AG04450 (cell line): ENCODE measurements at regions of chr14 and their contacts with region 1.

Region 1: DNA sequence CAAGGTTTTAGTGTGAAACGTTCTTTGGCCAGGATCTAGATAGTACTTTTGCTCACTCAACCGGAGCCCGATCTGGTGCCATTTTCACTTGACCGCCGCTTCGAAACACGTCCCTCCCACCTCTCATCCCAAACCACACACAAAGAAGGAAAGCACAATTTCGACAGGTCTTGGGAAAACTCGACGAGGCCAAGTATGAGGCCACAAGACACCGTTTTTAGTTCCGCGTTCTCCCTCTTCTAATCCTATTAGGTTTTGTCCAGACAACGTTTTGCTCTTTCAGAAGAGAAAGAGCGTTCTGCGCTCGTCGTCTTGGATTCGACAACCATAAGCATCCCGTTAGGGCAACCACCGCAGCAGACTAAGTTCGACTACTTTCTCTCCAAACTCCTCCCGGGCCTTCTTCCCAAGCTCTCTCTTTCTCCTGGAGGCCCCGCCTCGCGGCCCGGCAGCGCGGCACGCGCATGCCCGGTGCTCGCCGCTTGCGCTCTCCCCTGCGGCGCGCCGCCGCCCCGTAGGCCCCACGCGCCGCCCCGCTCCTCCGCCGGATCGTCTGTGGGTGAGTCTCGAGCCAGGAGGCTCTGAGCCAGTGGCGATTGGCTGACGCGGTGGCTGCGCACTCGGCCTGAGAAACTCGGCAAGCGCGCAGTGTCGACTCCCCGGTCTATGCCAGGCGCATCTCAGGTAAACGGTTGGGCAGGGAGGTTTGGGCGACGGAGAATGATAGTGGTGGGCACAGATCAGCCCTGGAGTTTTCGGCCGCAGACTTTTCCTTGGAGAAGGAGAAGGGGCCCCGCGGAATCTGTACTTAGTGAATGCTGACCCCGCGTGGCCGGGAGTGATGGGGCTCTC is at the start of gene MIPOL1:
- DNase-seq: peak; percentile 69
- H3K4me3 ChIP-seq: peak within 1 kb of the TSS; percentile 88
- H3K27ac ChIP-seq: peak within 1 kb of the TSS; percentile 95
- H3K27me3 ChIP-seq: no peaks in the 10 kb centered on the region
- CTCF ChIP-seq: peak; percentile 41
- polyA plus RNA-seq, gene MIPOL1: 4.8 and 7.0 TPM in 2 replicates

Region 2: DNA sequence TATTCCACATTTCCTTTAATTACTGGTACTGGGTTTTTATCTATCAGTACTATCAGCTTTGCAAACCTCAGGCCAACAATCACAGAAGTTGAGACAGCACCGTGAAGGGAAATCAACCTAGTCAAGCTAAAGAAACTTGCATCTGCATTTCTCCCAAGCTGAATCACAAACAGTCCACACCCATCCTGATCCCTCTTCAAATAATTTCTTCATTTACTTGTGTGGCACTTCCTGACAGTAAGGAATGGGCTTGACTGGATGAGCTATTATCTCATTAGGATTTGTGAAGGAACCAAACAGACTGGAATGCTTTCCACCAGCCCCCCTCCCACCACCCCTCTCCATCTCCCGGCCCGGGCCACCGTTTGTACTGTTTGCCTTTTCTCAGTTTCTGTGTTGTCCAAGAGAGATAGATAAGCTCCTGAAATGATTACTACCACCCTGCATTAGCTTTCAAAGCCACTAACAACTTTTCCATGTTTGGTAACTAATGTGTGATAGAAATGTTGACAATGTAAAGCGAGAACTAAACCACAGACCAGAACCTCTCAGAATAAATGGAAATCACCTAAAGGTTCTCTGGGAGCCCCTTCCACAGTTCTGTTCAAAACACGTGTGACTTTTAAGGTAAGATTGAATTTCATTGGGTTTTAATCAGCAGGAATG is 261.5 kb before region 1 on chr14:
- CTCF ChIA-PET with region 1: no interaction called
- POLR2A ChIA-PET with region 1: no interaction called
- DNase-seq: no peak
- H3K4me3 ChIP-seq: no peak overlapping the region
- H3K27ac ChIP-seq: no peak overlapping the region
- H3K27me3 ChIP-seq: peaks cover 3% of the 10 kb centered on the region
- CTCF ChIP-seq: no peak

Region 3: GRCh38 chr14:37172024-37172869 is 25.4 kb before region 1 on chr14 and contains the start of gene SLC25A21:
- CTCF ChIA-PET with region 1: interaction called, 3 read pairs
- POLR2A ChIA-PET with region 1: interaction called, 25 read pairs
- DNase-seq: peak; percentile 59
- H3K4me3 ChIP-seq: peak within 1 kb of the TSS; percentile 93
- H3K27ac ChIP-seq: peak within 1 kb of the TSS; percentile 97
- H3K27me3 ChIP-seq: no peaks in the 10 kb centered on the region
- CTCF ChIP-seq: peak; percentile 25; the same call in 1 of the 2 replicates
- polyA plus RNA-seq, gene SLC25A21: 1.5 and 2.0 TPM in 2 replicates

Region 4: DNA sequence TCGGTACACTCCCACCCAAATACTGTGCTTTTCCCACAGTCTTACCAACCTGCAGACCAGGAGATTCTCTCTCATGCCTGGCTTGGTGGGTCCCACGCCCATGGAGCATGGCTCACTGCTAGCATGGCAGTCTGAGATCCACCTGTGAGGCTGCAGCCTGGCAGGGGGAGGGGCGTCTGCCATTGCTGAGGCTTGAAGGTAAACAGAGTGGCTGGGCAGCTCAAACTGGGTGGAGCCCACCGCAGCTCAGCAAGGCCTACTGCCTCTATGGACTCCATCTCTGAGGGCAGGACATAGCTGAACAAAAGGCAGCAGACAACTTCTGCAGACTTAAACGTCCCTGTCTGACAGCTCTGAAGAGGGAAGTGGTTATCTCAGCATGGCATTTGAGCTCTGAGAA is 304.2 kb after region 1 on chr14:
- CTCF ChIA-PET with region 1: no interaction called
- POLR2A ChIA-PET with region 1: no interaction called
- DNase-seq: no peak
- H3K4me3 ChIP-seq: no peak overlapping the region
- H3K27ac ChIP-seq: no peak overlapping the region
- H3K27me3 ChIP-seq: no peaks in the 10 kb centered on the region
- CTCF ChIP-seq: no peak